B cell (primary cell): ENCODE measurements at regions of chr1 and their contacts with region 1.

Region 1: GRCh38 chr1:56578963-56579875 is at the start of gene PLPP3:
- DNase-seq: peak; percentile 62
- ATAC-seq: peak; percentile 20
- H3K4me3 ChIP-seq: peak within 1 kb of the TSS; percentile 51 to 84 (median 72)
- H3K4me3 Mint-ChIP-seq: peak within 1 kb of the TSS; percentile 99
- H3K27ac ChIP-seq: peak within 1 kb of the TSS in 1 of 2 donors; percentile 29
- H3K27ac Mint-ChIP-seq: peak within 1 kb of the TSS; percentile 89
- H3K4me1 ChIP-seq: peaks cover 35 to 40% of the 10 kb centered on the region in 2 donors
- H3K4me1 Mint-ChIP-seq: peaks cover 50% of the 10 kb centered on the region
- H3K27me3 ChIP-seq: no peaks in the 10 kb centered on the region
- H3K27me3 Mint-ChIP-seq: peaks cover 3% of the 10 kb centered on the region
- CTCF ChIP-seq: peak; percentile 49
- total RNA-seq, gene PLPP3: 2.9 and 3.4 TPM in 2 replicates

Region 2: DNA sequence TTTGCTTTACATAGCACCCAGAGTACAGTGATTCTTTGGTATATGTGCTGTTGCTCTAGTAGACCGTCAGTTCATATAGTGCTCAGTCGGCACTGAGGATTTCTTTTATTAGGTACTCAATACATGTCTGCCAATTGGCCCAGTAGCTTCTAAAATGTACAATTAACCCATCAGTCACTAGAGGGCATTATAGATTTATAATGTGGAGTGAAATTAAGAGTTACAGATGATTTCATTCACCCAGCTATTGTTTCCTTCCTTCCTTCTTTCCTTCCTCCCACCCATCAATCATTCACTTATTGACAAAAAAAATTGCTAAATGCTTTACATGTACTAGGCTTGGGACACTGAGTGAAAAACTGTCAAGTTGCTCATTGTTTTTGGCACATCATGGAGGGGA is 1100.5 kb before region 1 on chr1:
- CTCF ChIA-PET with region 1: interaction called, 25 read pairs
- POLR2A ChIA-PET with region 1: no interaction called
- intact Hi-C with region 1: loop called (anchors 10 kb)
- DNase-seq: no peak
- ATAC-seq: no peak
- H3K4me3 ChIP-seq: no peak overlapping the region
- H3K4me3 Mint-ChIP-seq: no peak overlapping the region
- H3K27ac ChIP-seq: no peak overlapping the region
- H3K27ac Mint-ChIP-seq: no peak overlapping the region
- H3K4me1 ChIP-seq: no peaks in the 10 kb centered on the region
- H3K4me1 Mint-ChIP-seq: no peaks in the 10 kb centered on the region
- H3K27me3 ChIP-seq: peaks cover 0 to 5% (median 0%) of the 10 kb centered on the region in 4 experiments
- H3K27me3 Mint-ChIP-seq: peaks cover 35% of the 10 kb centered on the region
- CTCF ChIP-seq: no peak

Region 3: GRCh38 chr1:56064705-56065104 is 514.5 kb before region 1 on chr1:
- CTCF ChIA-PET with region 1: no interaction called
- POLR2A ChIA-PET with region 1: no interaction called
- intact Hi-C with region 1: loop called (anchors 10 kb)
- DNase-seq: no peak
- ATAC-seq: no peak
- H3K4me3 ChIP-seq: no peak overlapping the region
- H3K4me3 Mint-ChIP-seq: no peak overlapping the region
- H3K27ac ChIP-seq: no peak overlapping the region
- H3K27ac Mint-ChIP-seq: no peak overlapping the region
- H3K4me1 ChIP-seq: peaks cover 7% of the 10 kb centered on the region in 2 donors
- H3K4me1 Mint-ChIP-seq: peaks cover 10% of the 10 kb centered on the region
- H3K27me3 ChIP-seq: peaks cover 0 to 9% (median 0%) of the 10 kb centered on the region in 4 experiments
- H3K27me3 Mint-ChIP-seq: peaks cover 11% of the 10 kb centered on the region
- CTCF ChIP-seq: no peak

Region 4: DNA sequence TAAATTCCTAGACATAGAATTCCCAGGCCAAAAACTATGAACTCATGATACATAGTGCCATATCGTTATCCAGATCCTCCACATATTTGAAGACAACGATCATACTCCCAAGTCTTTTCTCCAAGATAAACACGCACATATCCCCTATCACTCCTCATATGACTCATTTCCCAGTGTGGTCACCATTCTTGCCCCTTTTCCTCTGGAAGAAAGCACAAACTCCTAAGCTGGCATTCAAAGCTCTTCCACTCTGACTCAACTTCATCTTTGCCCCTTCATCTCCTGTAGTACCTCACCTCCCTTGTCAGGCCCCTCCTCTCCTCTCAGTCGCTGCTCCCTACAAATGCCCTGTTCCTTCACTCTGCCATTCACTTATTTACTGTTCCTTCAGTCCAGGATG is 277.4 kb before region 1 on chr1:
- CTCF ChIA-PET with region 1: no interaction called
- POLR2A ChIA-PET with region 1: no interaction called
- intact Hi-C with region 1: no loop called
- DNase-seq: no peak
- ATAC-seq: no peak
- H3K4me3 ChIP-seq: no peak overlapping the region
- H3K4me3 Mint-ChIP-seq: no peak overlapping the region
- H3K27ac ChIP-seq: no peak overlapping the region
- H3K27ac Mint-ChIP-seq: no peak overlapping the region
- H3K4me1 ChIP-seq: peaks cover under 1 to 1% of the 10 kb centered on the region in 2 donors
- H3K4me1 Mint-ChIP-seq: peaks cover 2% of the 10 kb centered on the region
- H3K27me3 ChIP-seq: no peaks in the 10 kb centered on the region
- H3K27me3 Mint-ChIP-seq: peaks cover 4% of the 10 kb centered on the region
- CTCF ChIP-seq: no peak

Region 5: DNA sequence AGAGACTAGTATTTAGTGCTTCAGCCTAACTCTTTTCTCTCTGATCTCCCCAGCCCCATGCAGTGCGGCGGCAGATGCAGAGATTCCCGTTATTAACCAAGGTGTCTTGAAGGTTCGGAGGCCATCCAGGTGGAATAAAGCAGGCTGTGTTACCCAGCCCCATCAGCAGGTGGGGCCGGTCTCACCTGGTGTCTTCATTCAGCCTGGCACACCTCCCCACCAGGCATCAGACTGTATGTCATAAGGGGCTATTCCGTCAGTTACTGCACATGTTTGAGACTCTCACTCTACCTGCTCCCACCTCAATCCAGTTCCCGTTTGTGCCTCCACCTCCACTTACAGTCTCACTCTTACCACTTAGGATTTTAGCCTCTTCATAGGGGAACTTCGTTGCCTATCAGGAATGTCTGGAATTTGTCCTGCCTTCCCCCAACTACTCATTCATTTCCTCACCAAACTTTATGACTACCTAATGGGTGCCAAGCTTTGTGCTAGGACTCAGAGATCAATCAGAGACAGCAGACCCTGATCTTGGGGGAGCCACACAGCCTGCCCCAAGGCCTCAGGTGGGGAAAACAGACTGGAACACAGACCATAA is 170.0 kb before region 1 on chr1:
- CTCF ChIA-PET with region 1: interaction called, 107 read pairs
- POLR2A ChIA-PET with region 1: no interaction called
- intact Hi-C with region 1: no loop called
- DNase-seq: peak; percentile 61
- ATAC-seq: no peak
- H3K4me3 ChIP-seq: no peak overlapping the region
- H3K4me3 Mint-ChIP-seq: no peak overlapping the region
- H3K27ac ChIP-seq: no peak overlapping the region
- H3K27ac Mint-ChIP-seq: no peak overlapping the region
- H3K4me1 ChIP-seq: peaks cover 11 to 16% of the 10 kb centered on the region in 2 donors
- H3K4me1 Mint-ChIP-seq: peaks cover 27% of the 10 kb centered on the region
- H3K27me3 ChIP-seq: no peaks in the 10 kb centered on the region
- H3K27me3 Mint-ChIP-seq: no peaks in the 10 kb centered on the region
- CTCF ChIP-seq: peak; percentile 67

Region 6: GRCh38 chr1:56424744-56425508 is 154.3 kb before region 1 on chr1:
- CTCF ChIA-PET with region 1: interaction called, 5 read pairs
- POLR2A ChIA-PET with region 1: no interaction called
- intact Hi-C with region 1: loop called (anchors 5 kb)
- DNase-seq: peak; percentile 81
- ATAC-seq: peak; percentile 99
- H3K4me3 ChIP-seq: peak overlapping the region in 1 of 5 experiments; percentile 31
- H3K4me3 Mint-ChIP-seq: peak overlapping the region; percentile 68
- H3K27ac ChIP-seq: peak overlapping the region; percentile 43 to 63
- H3K27ac Mint-ChIP-seq: peak overlapping the region; percentile 87
- H3K4me1 ChIP-seq: peaks cover 45 to 47% of the 10 kb centered on the region in 2 donors
- H3K4me1 Mint-ChIP-seq: peaks cover 46% of the 10 kb centered on the region
- H3K27me3 ChIP-seq: no peaks in the 10 kb centered on the region
- H3K27me3 Mint-ChIP-seq: no peaks in the 10 kb centered on the region
- CTCF ChIP-seq: no peak

Region 7: GRCh38 chr1:56477164-56478111 is 101.8 kb before region 1 on chr1:
- CTCF ChIA-PET with region 1: no interaction called
- POLR2A ChIA-PET with region 1: no interaction called
- intact Hi-C with region 1: loop called (anchors 2 kb)
- DNase-seq: peak; percentile 23
- ATAC-seq: no peak
- H3K4me3 ChIP-seq: peak overlapping the region; percentile 31 to 57 (median 45)
- H3K4me3 Mint-ChIP-seq: peak overlapping the region; percentile 78
- H3K27ac ChIP-seq: no peak overlapping the region
- H3K27ac Mint-ChIP-seq: no peak overlapping the region
- H3K4me1 ChIP-seq: peaks cover 14 to 23% of the 10 kb centered on the region in 2 donors
- H3K4me1 Mint-ChIP-seq: peaks cover 24% of the 10 kb centered on the region
- H3K27me3 ChIP-seq: peaks cover 0 to 20% (median 13%) of the 10 kb centered on the region in 4 experiments
- H3K27me3 Mint-ChIP-seq: peaks cover 26% of the 10 kb centered on the region
- CTCF ChIP-seq: no peak

Region 8: GRCh38 chr1:56502700-56503245 is 76.4 kb before region 1 on chr1:
- CTCF ChIA-PET with region 1: no interaction called
- POLR2A ChIA-PET with region 1: no interaction called
- intact Hi-C with region 1: no loop called
- DNase-seq: no peak
- ATAC-seq: no peak
- H3K4me3 ChIP-seq: no peak overlapping the region
- H3K4me3 Mint-ChIP-seq: no peak overlapping the region
- H3K27ac ChIP-seq: no peak overlapping the region
- H3K27ac Mint-ChIP-seq: no peak overlapping the region
- H3K4me1 ChIP-seq: peaks cover 7 to 10% of the 10 kb centered on the region in 2 donors
- H3K4me1 Mint-ChIP-seq: peaks cover 8% of the 10 kb centered on the region
- H3K27me3 ChIP-seq: no peaks in the 10 kb centered on the region
- H3K27me3 Mint-ChIP-seq: no peaks in the 10 kb centered on the region
- CTCF ChIP-seq: no peak

Region 9: DNA sequence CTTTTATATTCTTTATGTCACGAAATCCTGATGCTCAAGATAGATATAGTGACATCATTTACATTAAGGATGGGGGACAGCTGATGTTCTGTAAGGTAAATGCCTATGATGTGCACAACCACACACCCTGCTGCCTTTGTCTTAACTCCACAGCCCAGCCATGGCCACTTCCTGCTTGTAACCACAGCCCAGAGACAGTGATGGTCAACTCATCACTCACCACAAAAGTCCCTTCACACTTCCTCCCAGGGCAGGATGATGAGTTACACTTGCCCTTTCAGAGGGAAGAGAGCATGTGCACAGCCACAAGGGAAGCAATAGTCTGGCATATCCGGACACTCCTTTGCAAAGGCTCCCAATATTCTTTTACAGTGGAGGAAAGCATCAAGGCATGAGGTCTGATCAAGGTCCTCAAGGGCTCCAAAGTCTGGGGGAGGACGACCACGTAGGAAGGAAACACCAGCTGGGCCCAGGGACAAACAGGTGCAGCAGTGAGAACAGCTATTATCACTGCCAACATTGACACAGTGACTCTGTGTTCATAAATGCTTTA is 53.7 kb before region 1 on chr1:
- CTCF ChIA-PET with region 1: interaction called, 3 read pairs
- POLR2A ChIA-PET with region 1: no interaction called
- intact Hi-C with region 1: loop called (anchors 2 kb)
- DNase-seq: peak; percentile 33
- ATAC-seq: peak; percentile 46
- H3K4me3 ChIP-seq: no peak overlapping the region
- H3K4me3 Mint-ChIP-seq: peak overlapping the region; percentile 46
- H3K27ac ChIP-seq: peak overlapping the region in 1 of 2 donors; percentile 17
- H3K27ac Mint-ChIP-seq: peak overlapping the region; percentile 70
- H3K4me1 ChIP-seq: peaks cover 44 to 48% of the 10 kb centered on the region in 2 donors
- H3K4me1 Mint-ChIP-seq: peaks cover 63% of the 10 kb centered on the region
- H3K27me3 ChIP-seq: no peaks in the 10 kb centered on the region
- H3K27me3 Mint-ChIP-seq: no peaks in the 10 kb centered on the region
- CTCF ChIP-seq: no peak